ENCODE measurements at regions of chr6 and their contacts with region 1.

Region 1: DNA sequence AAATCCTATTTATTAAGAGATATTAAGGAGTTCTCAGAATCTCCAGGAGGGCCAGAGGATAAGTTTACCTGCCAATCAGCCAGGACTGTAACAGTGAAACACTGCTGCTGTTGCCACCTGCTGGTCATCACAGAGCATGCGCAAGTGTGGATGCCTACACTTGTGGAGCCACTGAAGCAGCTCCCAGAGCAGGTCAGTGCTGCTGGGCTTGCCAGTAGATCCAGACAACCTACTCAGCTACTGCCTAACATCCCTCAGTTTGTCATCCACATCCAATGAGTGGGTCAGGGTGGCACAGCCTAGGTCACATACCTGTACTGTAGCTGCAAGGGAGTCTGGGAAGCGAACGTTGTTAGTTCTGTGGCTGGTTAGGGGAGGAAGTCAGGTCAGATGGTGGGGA is 18.3 kb upstream of the NHSL1 start:
- DNase-seq: no peak
- ATAC-seq: peak; percentile 90
- H3K4me3 ChIP-seq: no peak overlapping the region
- H3K27ac ChIP-seq: no peak overlapping the region
- H3K4me1 ChIP-seq: peaks cover 11% of the 10 kb centered on the region
- H3K27me3 ChIP-seq: no peaks in the 10 kb centered on the region
- CTCF ChIP-seq: peak; percentile 67

Region 2: GRCh38 chr6:138428944-138429598 is 88.6 kb before region 1 on chr6:
- intact Hi-C with region 1: loop called (anchors 10 kb)
- DNase-seq: no peak
- ATAC-seq: peak; percentile 29
- H3K4me3 ChIP-seq: no peak overlapping the region
- H3K27ac ChIP-seq: no peak overlapping the region
- H3K4me1 ChIP-seq: peaks cover 6% of the 10 kb centered on the region
- H3K27me3 ChIP-seq: no peaks in the 10 kb centered on the region
- CTCF ChIP-seq: peak; percentile 62

Region 3: GRCh38 chr6:138638604-138639003 is 121.0 kb after region 1 on chr6:
- intact Hi-C with region 1: no loop called
- DNase-seq: no peak
- ATAC-seq: no peak
- H3K4me3 ChIP-seq: no peak overlapping the region
- H3K27ac ChIP-seq: no peak overlapping the region
- H3K4me1 ChIP-seq: no peaks in the 10 kb centered on the region
- H3K27me3 ChIP-seq: no peaks in the 10 kb centered on the region
- CTCF ChIP-seq: no peak

Measured in upper lobe of right lung (tissue), 1 donor.